Ovary (tissue), 10 donors: ENCODE measurements at regions of chr11 and their contacts with region 1.

Region 1: GRCh38 chr11:35272391-35272902 is 133.5 kb downstream of the CD44 start:
- DNase-seq: no peak
- H3K4me3 ChIP-seq: no peak overlapping the region
- H3K27ac ChIP-seq: no peak overlapping the region
- H3K4me1 ChIP-seq: no peaks in the 10 kb centered on the region
- H3K27me3 ChIP-seq: no peaks in the 10 kb centered on the region
- CTCF ChIP-seq: no peak
- EP300 ChIP-seq: no peak
- POLR2A ChIP-seq: no peak

Region 2: DNA sequence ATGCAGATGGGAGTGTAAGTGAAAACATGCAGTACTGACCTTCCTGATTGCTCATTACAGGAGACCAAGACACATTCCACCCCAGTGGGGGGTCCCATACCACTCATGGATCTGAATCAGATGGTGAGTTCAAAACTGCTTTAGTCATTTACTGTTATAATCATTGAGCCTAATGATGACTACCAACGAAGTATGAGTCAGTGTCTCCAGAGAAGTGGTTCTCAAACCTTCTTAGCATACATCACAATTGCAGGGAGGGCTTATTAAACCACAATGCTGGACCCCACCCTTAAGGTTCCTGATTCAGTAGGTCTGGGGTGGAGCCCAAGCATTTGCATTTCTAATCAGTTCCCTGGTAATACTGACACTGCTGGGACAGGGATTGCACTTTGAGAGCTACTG is 57.7 kb before region 1 on chr11:
- intact Hi-C with region 1: loop called in 1 of 4 experiments (anchors 10 kb)
- DNase-seq: no peak
- H3K4me3 ChIP-seq: no peak overlapping the region
- H3K27ac ChIP-seq: no peak overlapping the region
- H3K4me1 ChIP-seq: no peaks in the 10 kb centered on the region
- H3K27me3 ChIP-seq: no peaks in the 10 kb centered on the region
- CTCF ChIP-seq: no peak
- EP300 ChIP-seq: no peak
- POLR2A ChIP-seq: no peak

Region 3: DNA sequence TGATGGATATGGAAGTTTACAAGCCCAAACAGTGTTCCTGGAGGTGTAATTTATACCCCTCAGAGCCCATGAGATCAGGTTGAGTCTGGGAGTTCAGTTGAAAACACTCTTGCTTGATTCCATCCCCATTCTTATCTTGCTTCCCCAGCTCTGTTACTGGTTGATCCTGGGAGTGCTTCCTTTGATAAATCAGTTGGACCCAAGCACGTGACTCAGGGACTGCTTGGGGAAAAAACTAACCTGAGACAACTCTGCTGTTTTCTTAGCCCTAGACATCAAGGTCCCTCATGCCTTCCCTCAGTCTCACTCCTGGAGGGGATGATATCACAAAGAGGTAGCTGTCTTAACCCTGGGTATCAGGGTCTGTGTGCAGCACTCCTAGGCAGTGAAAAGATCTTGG is 181.9 kb after region 1 on chr11:
- intact Hi-C with region 1: no loop called
- DNase-seq: no peak
- H3K4me3 ChIP-seq: no peak overlapping the region
- H3K27ac ChIP-seq: no peak overlapping the region
- H3K4me1 ChIP-seq: no peaks in the 10 kb centered on the region
- H3K27me3 ChIP-seq: no peaks in the 10 kb centered on the region
- CTCF ChIP-seq: no peak
- EP300 ChIP-seq: no peak
- POLR2A ChIP-seq: no peak